ENCODE measurements at regions of chr1 and their contacts with region 1.

Region 1: DNA sequence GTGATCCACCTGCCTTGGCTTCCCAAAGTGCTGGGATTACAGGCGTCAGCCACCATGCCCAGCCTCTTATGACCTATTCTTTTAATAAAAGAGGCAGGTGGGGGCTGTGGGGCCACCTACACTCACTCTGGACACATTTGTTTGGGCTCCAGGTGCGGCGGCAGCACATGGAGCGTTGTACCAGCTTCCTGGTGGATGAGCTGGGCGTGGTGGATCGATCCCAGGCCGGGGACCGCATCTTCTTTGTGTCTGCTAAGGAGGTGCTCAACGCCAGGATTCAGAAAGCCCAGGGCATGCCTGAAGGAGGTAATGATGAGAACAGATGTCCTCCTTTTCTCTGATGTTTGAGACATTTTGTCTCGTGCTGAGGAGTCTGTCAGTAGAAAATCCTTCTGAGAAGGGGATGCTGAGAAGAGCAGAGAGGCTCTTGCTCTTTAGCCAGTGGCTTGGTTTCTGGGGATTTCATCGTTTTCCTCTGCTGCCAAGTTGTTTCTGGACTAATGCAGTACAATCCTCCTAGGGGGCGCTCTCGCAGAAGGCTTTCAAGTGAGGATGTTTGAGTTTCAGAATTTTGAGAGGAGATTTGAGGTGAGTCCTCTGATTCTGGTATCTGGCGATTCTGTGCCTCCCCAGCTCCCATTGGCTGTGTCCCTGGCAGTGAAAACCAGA is 17.9 kb upstream of the MIIP start:
- DNase-seq: peak; percentile 88
- ATAC-seq: peak; percentile 84
- H3K4me3 Mint-ChIP-seq: no peak overlapping the region
- H3K27ac Mint-ChIP-seq: peak overlapping the region; percentile 86
- H3K4me1 Mint-ChIP-seq: no peaks in the 10 kb centered on the region
- H3K27me3 Mint-ChIP-seq: no peaks in the 10 kb centered on the region

Region 2: GRCh38 chr1:12078938-12079861 is 77.8 kb after region 1 on chr1:
- CTCF ChIA-PET with region 1: interaction called, 3 read pairs
- POLR2A ChIA-PET with region 1: no interaction called
- intact Hi-C with region 1: loop called in 1 of 2 experiments (anchors 1 kb)
- DNase-seq: peak; percentile 77
- ATAC-seq: peak; percentile 79
- H3K4me3 Mint-ChIP-seq: no peak overlapping the region
- H3K27ac Mint-ChIP-seq: peak overlapping the region; percentile 67
- H3K4me1 Mint-ChIP-seq: peaks cover 24% of the 10 kb centered on the region
- H3K27me3 Mint-ChIP-seq: peaks cover 5% of the 10 kb centered on the region

Region 3: GRCh38 chr1:12314333-12314903 is 313.0 kb after region 1 on chr1:
- CTCF ChIA-PET with region 1: no interaction called
- POLR2A ChIA-PET with region 1: no interaction called
- intact Hi-C with region 1: no loop called
- DNase-seq: no peak
- ATAC-seq: no peak
- H3K4me3 Mint-ChIP-seq: no peak overlapping the region
- H3K27ac Mint-ChIP-seq: no peak overlapping the region
- H3K4me1 Mint-ChIP-seq: no peaks in the 10 kb centered on the region
- H3K27me3 Mint-ChIP-seq: no peaks in the 10 kb centered on the region